CD4-positive, alpha-beta memory T cell (primary cell): ENCODE measurements at regions of chr2 and their contacts with region 1.

Region 1: GRCh38 chr2:26244309-26245121 is at the starts of genes HADHA and HADHB:
- DNase-seq: peak; percentile 87 to 94 (median 90)
- H3K4me3 ChIP-seq: peak within 1 kb of the TSS; percentile 75 to 84
- H3K4me3 Mint-ChIP-seq: peak within 1 kb of the TSS; percentile 91 to 100 (median 99)
- H3K27ac ChIP-seq: peak within 1 kb of the TSS; percentile 89
- H3K27ac Mint-ChIP-seq: peak within 1 kb of the TSS; percentile 95 to 100 (median 100)
- H3K4me1 ChIP-seq: peaks cover 43% of the 10 kb centered on the region
- H3K4me1 Mint-ChIP-seq: peaks cover 38 to 70% (median 50%) of the 10 kb centered on the region in 4 donors
- H3K27me3 ChIP-seq: no peaks in the 10 kb centered on the region
- H3K27me3 Mint-ChIP-seq: no peaks in the 10 kb centered on the region
- total RNA-seq, gene HADHA: 89.1 to 93.6 TPM
- total RNA-seq, gene HADHB: 58.8 to 67.1 TPM

Region 2: DNA sequence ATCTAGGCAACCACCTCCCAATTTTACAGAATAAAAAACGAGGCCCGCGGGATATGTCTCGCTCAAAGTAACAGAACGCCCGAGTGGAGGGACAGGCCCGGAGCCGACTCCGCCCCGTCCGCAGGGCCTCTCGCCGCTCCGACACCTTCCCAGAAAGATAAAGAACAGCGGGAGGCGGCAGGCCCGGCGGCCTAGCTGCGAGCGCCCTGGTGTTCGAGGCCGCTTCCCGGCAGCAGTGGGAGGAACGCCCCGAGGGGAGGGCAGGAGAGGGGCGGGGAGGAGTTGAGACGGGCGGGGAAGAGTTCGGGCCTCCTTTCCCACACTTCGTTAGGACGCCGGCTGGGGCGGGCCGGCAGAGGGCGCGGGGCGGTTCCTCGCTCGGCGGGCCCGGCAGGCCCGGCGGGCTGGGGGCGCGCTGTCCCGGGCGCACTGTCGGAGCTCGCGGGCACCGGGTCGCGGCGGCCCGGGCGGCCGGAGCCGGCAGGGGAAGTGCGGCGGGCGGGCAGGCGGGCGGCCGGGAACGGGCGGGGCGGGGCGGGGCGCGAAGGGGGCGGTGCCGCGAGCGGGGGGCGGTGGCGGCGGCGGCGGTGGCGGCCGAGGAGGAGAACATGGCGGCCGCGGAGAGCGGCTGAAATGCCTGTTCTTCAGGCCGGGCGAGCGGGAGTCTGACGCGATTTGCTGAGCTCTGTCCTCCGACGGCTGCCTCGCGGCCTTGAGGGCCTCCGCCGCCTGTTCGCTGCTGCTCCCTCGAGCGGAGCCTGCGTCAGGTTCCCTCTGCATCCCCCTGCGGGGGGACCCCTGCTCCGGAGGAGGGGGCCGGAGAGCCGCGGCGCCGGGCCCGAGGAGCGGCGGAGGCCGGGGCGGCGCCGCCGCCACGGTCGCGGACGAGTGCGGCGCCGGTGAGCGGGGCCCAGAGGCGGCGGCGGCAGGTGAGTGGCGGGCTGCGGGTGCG is 1753.6 kb before region 1 on chr2 and contains the start of gene NCOA1:
- CTCF ChIA-PET with region 1: no interaction called
- POLR2A ChIA-PET with region 1: no interaction called
- intact Hi-C with region 1: loop called (anchors 5 kb)
- DNase-seq: peak; percentile 90 to 92 (median 92)
- H3K4me3 ChIP-seq: peak within 1 kb of the TSS; percentile 51 to 62
- H3K4me3 Mint-ChIP-seq: peak within 1 kb of the TSS; percentile 87 to 95 (median 90)
- H3K27ac ChIP-seq: peak within 1 kb of the TSS; percentile 84
- H3K27ac Mint-ChIP-seq: peak within 1 kb of the TSS; percentile 94 to 98 (median 97)
- H3K4me1 ChIP-seq: peaks cover 51% of the 10 kb centered on the region
- H3K4me1 Mint-ChIP-seq: peaks cover 39 to 57% (median 50%) of the 10 kb centered on the region in 4 donors
- H3K27me3 ChIP-seq: no peaks in the 10 kb centered on the region
- H3K27me3 Mint-ChIP-seq: no peaks in the 10 kb centered on the region
- total RNA-seq, gene NCOA1: 40.6 to 46.2 TPM

Region 3: GRCh38 chr2:25787013-25787412 is 457.5 kb before region 1 on chr2:
- CTCF ChIA-PET with region 1: no interaction called
- POLR2A ChIA-PET with region 1: no interaction called
- intact Hi-C with region 1: no loop called
- DNase-seq: no peak
- H3K4me3 ChIP-seq: no peak overlapping the region
- H3K4me3 Mint-ChIP-seq: no peak overlapping the region
- H3K27ac ChIP-seq: no peak overlapping the region
- H3K27ac Mint-ChIP-seq: peak overlapping the region in 1 of 7 donors; percentile 48
- H3K4me1 ChIP-seq: peaks cover 46% of the 10 kb centered on the region
- H3K4me1 Mint-ChIP-seq: peaks cover 28 to 49% (median 44%) of the 10 kb centered on the region in 4 donors
- H3K27me3 ChIP-seq: no peaks in the 10 kb centered on the region
- H3K27me3 Mint-ChIP-seq: no peaks in the 10 kb centered on the region

Region 4: GRCh38 chr2:25878361-25879132 is 366.0 kb before region 1 on chr2 and contains the start of gene ASXL2:
- CTCF ChIA-PET with region 1: no interaction called
- POLR2A ChIA-PET with region 1: interaction called, 6 read pairs
- intact Hi-C with region 1: loop called (anchors 1 kb)
- DNase-seq: peak; percentile 97 to 98 (median 97)
- H3K4me3 ChIP-seq: peak within 1 kb of the TSS; percentile 81 to 98
- H3K4me3 Mint-ChIP-seq: peak within 1 kb of the TSS; percentile 94 to 99 (median 97)
- H3K27ac ChIP-seq: peak within 1 kb of the TSS; percentile 98
- H3K27ac Mint-ChIP-seq: peak within 1 kb of the TSS; percentile 94 to 99 (median 99)
- H3K4me1 ChIP-seq: peaks cover 39% of the 10 kb centered on the region
- H3K4me1 Mint-ChIP-seq: peaks cover 27 to 47% (median 35%) of the 10 kb centered on the region in 4 donors
- H3K27me3 ChIP-seq: no peaks in the 10 kb centered on the region
- H3K27me3 Mint-ChIP-seq: no peaks in the 10 kb centered on the region
- total RNA-seq, gene ASXL2: 56.0 to 63.6 TPM

Region 5: DNA sequence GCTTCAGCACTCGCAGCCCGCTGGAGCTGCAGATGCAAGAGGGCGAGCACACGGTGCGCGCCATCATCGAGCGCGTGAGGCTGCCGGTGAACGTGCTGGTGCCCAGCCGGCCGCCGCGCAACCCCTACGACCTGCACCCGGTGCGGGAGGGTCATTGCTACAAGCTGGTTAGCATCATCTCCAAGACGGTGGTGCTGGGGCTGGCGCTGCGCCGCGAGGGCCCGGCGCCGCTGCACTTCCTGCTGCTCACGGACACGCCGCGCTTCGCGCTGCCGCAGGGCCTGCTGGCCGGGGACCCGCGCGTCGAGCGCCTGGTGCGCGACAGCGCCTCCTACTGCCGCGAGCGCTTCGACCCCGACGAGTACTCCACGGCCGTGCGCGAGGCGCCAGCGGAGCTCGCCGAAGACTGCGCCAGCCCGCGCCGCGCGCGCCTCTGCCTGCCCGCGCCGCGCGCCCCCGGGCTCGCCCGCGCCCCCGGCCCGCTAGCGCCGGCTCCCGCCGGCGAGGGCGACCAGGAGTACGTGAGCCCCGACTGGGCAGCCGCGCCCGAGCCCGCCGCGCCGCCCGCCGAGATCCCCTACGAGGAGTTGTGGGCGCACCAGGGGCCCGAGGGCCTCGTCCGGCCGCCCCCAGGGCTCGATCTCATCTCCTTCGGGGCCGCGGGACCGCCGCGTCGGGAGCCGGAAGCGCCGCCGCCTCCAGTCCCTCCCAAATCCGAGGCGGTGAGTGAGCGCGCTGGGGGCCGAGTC is 59.8 kb before region 1 on chr2:
- CTCF ChIA-PET with region 1: interaction called, 11 read pairs
- POLR2A ChIA-PET with region 1: interaction called, 26 read pairs
- intact Hi-C with region 1: no loop called
- DNase-seq: peak; percentile 83 to 89 (median 87)
- H3K4me3 ChIP-seq: peak overlapping the region; percentile 24 to 64
- H3K4me3 Mint-ChIP-seq: peak overlapping the region; percentile 83 to 89 (median 86)
- H3K27ac ChIP-seq: peak overlapping the region; percentile 24
- H3K27ac Mint-ChIP-seq: peak overlapping the region in 2 of 7 donors; percentile 46 to 83
- H3K4me1 ChIP-seq: peaks cover 19% of the 10 kb centered on the region
- H3K4me1 Mint-ChIP-seq: peaks cover 10 to 26% (median 18%) of the 10 kb centered on the region in 4 donors
- H3K27me3 ChIP-seq: no peaks in the 10 kb centered on the region
- H3K27me3 Mint-ChIP-seq: peaks cover 8 to 15% of the 10 kb centered on the region in 2 donors

Region 6: DNA sequence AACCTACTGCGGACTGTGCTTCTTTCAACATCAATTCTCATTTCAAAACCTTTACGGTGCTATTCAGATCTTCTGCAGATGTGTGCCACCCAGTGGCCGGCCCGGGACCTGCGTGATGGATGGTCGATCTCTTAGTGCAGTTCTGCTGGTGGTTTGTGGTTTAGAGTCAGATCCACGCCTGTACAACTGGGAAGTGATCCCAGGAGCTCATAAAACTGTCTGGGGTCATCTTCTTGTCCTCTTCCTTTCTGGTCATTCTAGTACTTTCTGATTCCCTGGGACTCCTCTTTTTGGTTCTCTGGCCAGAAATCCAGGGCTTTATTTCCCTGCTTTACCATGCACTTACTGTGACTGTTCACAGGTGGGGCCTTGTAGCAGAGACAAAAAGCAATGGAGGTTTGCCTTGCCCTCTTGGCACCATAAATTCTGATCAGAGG is 85.6 kb after region 1 on chr2:
- CTCF ChIA-PET with region 1: interaction called, 9 read pairs
- POLR2A ChIA-PET with region 1: no interaction called
- intact Hi-C with region 1: loop called (anchors 2 kb)
- DNase-seq: peak; percentile 71 to 81 (median 73)
- H3K4me3 ChIP-seq: no peak overlapping the region
- H3K4me3 Mint-ChIP-seq: peak overlapping the region in 1 of 8 donors; percentile 60
- H3K27ac ChIP-seq: no peak overlapping the region
- H3K27ac Mint-ChIP-seq: peak overlapping the region in 2 of 7 donors; percentile 24 to 31
- H3K4me1 ChIP-seq: peaks cover 8% of the 10 kb centered on the region
- H3K4me1 Mint-ChIP-seq: peaks cover 6 to 10% (median 8%) of the 10 kb centered on the region in 4 donors
- H3K27me3 ChIP-seq: no peaks in the 10 kb centered on the region
- H3K27me3 Mint-ChIP-seq: no peaks in the 10 kb centered on the region